Prostate gland (tissue), 2 donors: ENCODE measurements at regions of chr3 and their contacts with region 1.

Region 1: DNA sequence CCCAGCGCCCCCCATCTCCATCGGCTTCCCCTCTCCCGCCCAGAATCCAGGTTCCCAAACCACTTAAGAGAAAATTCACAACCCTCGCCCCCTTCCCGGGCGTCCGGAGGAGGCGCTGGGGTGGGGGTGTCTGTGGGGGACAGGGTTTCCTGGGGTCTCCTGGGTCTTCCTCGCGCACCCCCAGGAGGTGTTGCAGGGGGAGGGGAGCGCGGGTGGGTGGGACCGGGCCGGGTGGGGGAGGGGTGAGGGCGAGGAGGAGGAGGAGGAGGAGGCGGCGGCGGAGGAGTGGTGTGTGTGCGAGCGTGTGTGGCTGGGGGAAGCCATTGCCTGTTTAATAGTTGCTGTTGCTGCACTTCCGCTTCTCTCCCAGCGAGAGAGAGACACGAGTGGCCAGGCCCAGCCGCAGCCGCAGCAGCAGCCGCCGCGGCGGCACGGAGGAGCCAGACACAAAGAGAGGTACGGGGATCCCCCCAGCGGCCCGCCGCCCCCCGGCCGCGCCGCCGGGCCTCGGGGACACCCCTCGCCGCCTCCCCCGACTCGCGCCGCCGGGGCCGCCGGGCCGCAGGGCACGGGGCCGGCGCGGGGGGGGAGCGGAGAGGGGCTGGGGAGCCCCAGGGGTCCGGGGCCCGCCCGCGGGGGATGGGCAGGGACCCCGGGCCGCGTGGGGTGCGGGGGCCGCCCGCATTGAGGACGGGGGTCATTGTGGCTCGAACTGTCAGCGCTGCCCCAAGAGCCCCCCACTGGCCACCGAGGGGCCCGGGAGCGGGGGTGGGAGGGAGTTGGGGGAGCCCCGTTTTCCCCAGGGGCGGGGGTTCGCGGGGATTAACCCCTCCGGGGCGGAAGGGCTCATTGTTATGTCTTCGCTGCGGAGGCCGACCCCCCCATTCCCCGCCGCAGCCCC is at the start of gene UBE2E1:
- DNase-seq: peak; percentile 61
- H3K4me3 ChIP-seq: peak within 1 kb of the TSS; percentile 92 to 99
- H3K27ac ChIP-seq: peak within 1 kb of the TSS; percentile 93 to 96
- H3K4me1 ChIP-seq: peaks cover 6% of the 10 kb centered on the region
- H3K27me3 ChIP-seq: no peaks in the 10 kb centered on the region
- CTCF ChIP-seq: no peak
- POLR2A ChIP-seq: peak; percentile 50
- total RNA-seq, gene UBE2E1: 77.8 to 92.1 TPM

Region 2: DNA sequence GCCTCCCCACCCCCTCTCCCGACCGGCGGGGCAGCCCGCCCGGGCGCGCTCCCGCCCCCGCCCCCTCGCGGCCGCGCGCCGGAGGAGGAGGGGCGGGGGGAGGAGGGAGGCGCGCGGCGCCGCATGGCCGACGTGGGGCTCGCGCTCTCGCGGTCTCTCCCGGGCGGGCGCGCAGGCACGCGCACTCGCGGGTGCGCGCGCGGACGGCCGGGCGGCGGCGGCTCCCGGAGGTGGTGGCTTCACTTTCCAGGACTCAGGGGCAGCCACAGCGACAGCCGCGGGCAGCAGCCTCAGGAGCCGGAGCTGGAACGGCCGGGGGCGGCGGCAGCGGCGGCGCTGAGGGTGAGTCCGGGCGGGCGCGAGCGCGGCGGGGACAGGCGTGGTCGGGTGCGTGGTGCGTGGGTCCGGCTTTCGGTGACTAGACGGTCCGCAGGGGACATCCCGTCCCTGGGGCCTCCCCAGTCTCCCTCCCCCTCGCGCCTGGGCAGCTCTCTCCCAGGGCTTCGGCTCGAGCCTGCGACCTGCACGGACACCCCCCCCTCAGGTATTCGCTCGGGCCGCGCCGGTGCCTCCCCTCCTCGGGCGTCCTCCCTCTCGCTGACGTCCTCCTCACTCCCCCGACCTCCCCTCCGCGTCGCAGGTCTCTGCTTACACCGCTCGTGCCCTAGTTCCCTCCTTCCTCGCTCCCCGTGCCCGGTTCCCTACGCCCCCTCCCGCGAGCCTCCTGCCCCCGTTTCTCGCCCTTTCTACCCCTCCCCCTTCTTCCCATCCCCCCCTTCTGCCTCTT is 602.8 kb before region 1 on chr3 and contains the start of gene UBE2E2:
- intact Hi-C with region 1: loop called (anchors 10 kb)
- DNase-seq: peak; percentile 68
- H3K4me3 ChIP-seq: peak within 1 kb of the TSS; percentile 88 to 97
- H3K27ac ChIP-seq: peak within 1 kb of the TSS; percentile 82 to 88
- H3K4me1 ChIP-seq: no peaks in the 10 kb centered on the region
- H3K27me3 ChIP-seq: no peaks in the 10 kb centered on the region
- CTCF ChIP-seq: peak in 1 of 4 experiments; percentile 12
- POLR2A ChIP-seq: peak; percentile 40
- total RNA-seq, gene UBE2E2: 25.9 to 48.7 TPM

Region 3: GRCh38 chr3:24017305-24017704 is 211.4 kb after region 1 on chr3:
- intact Hi-C with region 1: no loop called
- DNase-seq: no peak
- H3K4me3 ChIP-seq: no peak overlapping the region
- H3K27ac ChIP-seq: no peak overlapping the region
- H3K4me1 ChIP-seq: no peaks in the 10 kb centered on the region
- H3K27me3 ChIP-seq: no peaks in the 10 kb centered on the region
- CTCF ChIP-seq: no peak
- POLR2A ChIP-seq: no peak

Region 4: DNA sequence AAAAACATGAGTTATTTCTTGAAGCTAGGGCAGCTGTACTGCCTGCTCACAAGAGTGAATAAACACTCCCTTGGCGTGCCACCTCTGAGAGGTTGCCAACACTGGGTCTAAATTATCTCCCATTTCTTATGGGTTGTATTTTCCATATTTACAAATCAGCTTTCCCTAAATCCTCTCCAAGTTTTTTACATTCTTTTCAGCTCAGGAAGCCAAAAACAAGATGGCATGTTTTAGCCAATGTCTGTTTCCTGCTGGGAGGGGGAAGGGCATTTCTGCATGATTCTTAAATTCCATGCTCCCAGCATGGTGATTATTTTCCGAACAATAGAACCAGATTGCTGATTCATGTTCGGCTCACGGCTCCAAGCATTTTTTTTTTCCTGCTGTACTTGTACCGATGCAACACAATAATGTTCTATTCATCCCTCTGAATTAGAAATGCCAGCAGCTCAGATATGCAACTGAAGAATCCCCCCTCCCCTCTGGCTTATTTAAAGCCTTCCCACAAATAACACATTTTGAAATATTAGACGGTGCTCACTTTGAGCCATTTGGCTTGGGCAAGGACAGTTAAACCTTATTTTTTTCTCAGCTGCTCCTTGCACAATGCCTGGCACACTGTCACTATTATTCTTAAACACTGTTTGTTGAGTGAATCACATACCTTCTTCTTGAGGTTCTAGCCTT is 436.3 kb after region 1 on chr3:
- intact Hi-C with region 1: no loop called
- DNase-seq: peak; percentile 29
- H3K4me3 ChIP-seq: no peak overlapping the region
- H3K27ac ChIP-seq: no peak overlapping the region
- H3K4me1 ChIP-seq: no peaks in the 10 kb centered on the region
- H3K27me3 ChIP-seq: no peaks in the 10 kb centered on the region
- CTCF ChIP-seq: no peak
- POLR2A ChIP-seq: no peak